ENCODE measurements at regions of chr13 and their contacts with region 1.

Region 1: GRCh38 chr13:46641274-46642081 is 88.5 kb downstream of the LRCH1 start:
- DNase-seq: no peak
- H3K4me3 ChIP-seq: no peak overlapping the region
- H3K27ac ChIP-seq: no peak overlapping the region
- H3K4me1 ChIP-seq: peaks cover 28% of the 10 kb centered on the region
- CTCF ChIP-seq: no peak

Region 2: GRCh38 chr13:46630431-46631178 is 10.9 kb before region 1 on chr13:
- CTCF ChIA-PET with region 1: interaction called, 3 read pairs
- POLR2A ChIA-PET with region 1: interaction called, 11 read pairs
- intact Hi-C with region 1: no loop called
- DNase-seq: no peak
- H3K4me3 ChIP-seq: no peak overlapping the region
- H3K27ac ChIP-seq: no peak overlapping the region
- H3K4me1 ChIP-seq: peaks cover 29% of the 10 kb centered on the region
- CTCF ChIP-seq: no peak

Region 3: DNA sequence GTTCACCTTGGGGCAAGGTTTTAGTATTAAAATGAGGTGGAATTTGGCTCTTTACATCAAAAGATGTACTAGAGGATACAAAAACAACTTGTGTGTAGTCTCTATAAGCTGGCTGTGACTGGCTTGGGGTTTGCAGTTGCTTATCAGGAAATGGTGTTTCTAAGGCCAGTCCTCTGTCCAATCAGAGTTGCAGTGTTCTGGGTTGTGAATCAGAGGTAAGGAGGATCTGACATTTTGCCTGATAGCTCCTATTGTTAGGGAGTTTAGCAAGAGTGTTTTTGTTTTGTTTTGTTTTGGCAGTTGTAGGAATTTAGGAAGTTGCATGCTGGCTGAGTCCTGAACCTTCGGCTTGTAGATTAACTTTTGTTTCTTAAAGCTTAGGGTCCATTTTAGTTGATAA is 175.6 kb after region 1 on chr13:
- CTCF ChIA-PET with region 1: no interaction called
- POLR2A ChIA-PET with region 1: no interaction called
- intact Hi-C with region 1: no loop called
- DNase-seq: no peak
- H3K4me3 ChIP-seq: no peak overlapping the region
- H3K27ac ChIP-seq: no peak overlapping the region
- H3K4me1 ChIP-seq: no peaks in the 10 kb centered on the region
- CTCF ChIP-seq: no peak

Region 4: GRCh38 chr13:46893798-46894560 is 252.5 kb after region 1 on chr13:
- CTCF ChIA-PET with region 1: no interaction called
- POLR2A ChIA-PET with region 1: no interaction called
- intact Hi-C with region 1: no loop called
- DNase-seq: peak; percentile 69
- H3K4me3 ChIP-seq: no peak overlapping the region
- H3K27ac ChIP-seq: no peak overlapping the region
- H3K4me1 ChIP-seq: no peaks in the 10 kb centered on the region
- CTCF ChIP-seq: peak; percentile 96

Measured in OCI-LY7 (cell line).